GM10248 (cell line): ENCODE measurements at regions of chr5 and their contacts with region 1.

Region 1: GRCh38 chr5:116068028-116068632 is 16.7 kb upstream of the COMMD10 start:
- DNase-seq: peak; percentile 37
- CTCF ChIP-seq: peak; percentile 64

Region 2: DNA sequence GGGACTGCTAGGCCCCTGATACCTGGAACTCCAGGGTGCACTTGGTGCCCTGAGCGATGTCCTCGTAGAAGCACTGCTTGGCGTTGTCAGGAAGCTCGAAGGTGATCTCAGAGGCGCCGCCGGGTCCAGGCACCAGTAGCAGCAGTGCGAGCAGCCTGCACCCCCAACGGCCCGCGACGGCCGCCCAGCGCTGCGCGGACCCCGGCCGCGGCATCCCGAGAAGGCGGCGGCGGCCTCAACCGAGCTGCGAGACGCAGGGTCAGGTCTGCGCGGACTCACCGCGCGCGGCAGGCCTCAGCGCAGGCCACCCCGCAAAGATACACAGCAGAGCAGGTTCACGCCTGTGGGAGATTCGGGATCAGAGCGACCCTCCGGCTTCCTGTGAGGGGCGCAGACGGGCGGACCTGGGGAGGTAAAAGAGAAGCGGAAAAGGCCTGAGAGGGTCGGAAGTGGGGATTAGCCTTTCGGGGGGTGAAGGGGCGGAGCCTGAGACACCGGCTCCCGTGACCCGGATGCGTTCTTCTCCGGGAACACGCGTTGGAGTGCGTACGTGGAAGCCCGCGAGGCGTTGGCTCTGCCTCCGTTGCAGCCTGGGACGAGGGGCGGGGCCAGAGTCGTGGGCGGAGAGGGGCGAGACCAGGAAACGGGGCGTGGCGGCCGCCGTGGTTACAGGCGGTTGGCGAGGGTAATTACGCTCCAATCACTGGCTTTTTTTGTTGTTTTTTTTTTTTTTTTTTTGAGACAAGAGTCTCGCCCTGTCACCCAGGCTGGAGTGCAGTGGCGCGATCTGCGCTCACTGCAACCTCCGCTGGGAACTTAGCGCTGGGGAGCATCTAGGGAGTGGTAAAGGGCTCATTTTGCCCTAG is 442.3 kb before region 1 on chr5 and contains the start of gene TMED7:
- CTCF ChIA-PET with region 1: interaction called, 15 read pairs
- POLR2A ChIA-PET with region 1: no interaction called
- DNase-seq: peak; percentile 97
- CTCF ChIP-seq: no peak

Region 3: DNA sequence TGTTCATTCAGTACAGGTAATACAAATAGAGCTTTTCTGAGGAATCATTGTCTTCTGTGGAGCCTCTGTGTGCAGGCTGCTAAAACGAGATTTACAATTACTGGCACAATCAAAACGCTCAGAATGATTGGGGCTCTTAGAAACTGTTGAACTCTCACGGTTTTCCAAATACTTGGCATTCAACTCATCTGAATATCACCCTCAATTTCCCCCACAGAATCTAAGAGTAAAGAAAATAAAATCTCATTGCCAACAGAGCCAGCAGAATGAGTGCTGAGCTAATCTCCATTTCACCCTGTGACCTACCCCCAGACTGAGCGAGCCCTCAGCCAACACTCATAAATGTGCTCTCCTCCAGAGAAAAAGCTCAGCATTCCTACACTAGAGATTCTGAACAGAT is 407.0 kb before region 1 on chr5:
- CTCF ChIA-PET with region 1: no interaction called
- POLR2A ChIA-PET with region 1: interaction called, 15 read pairs
- DNase-seq: no peak
- CTCF ChIP-seq: no peak

Region 4: GRCh38 chr5:116084871-116085715 is 17.0 kb after region 1 on chr5 and contains the start of gene COMMD10:
- CTCF ChIA-PET with region 1: interaction called, 12 read pairs
- POLR2A ChIA-PET with region 1: interaction called, 3 read pairs
- DNase-seq: peak; percentile 77
- CTCF ChIP-seq: no peak